Activated naive CD4-positive, alpha-beta T cell treated with anti-CD3 and anti-CD28 coated beads for 36 hours (primary cell): ENCODE measurements at regions of chr7 and their contacts with region 1.

Region 1: GRCh38 chr7:151028131-151028947 is at the start of gene ABCB8:
- DNase-seq: peak; percentile 100
- H3K4me3 Mint-ChIP-seq: peak within 1 kb of the TSS; percentile 91
- H3K27ac Mint-ChIP-seq: peak within 1 kb of the TSS; percentile 90
- H3K4me1 Mint-ChIP-seq: peaks cover 20% of the 10 kb centered on the region
- H3K27me3 Mint-ChIP-seq: no peaks in the 10 kb centered on the region
- total RNA-seq, gene ABCB8: 41.3 to 47.8 TPM

Region 2: DNA sequence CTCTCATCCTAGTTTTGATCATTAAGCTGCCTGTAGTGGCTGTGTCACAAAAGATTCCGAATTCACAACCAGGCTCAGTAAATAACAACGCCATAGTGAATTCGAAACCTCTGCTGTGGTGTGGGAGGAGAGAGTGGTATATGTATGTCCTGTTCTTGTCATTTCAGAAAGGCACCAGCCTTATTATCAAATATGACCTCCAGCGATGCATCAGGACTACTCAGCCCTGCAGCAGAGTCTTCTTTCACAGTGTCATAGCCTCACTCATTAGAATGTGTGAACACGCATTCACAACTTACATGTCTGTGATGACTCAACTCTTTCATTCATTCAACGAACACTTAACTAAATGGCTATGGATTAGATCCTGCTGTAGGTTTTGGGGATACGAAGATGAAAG is 160.7 kb before region 1 on chr7:
- CTCF ChIA-PET with region 1: no interaction called
- intact Hi-C with region 1: no loop called
- DNase-seq: no peak
- H3K4me3 Mint-ChIP-seq: no peak overlapping the region
- H3K27ac Mint-ChIP-seq: no peak overlapping the region
- H3K4me1 Mint-ChIP-seq: no peaks in the 10 kb centered on the region
- H3K27me3 Mint-ChIP-seq: no peaks in the 10 kb centered on the region

Region 3: DNA sequence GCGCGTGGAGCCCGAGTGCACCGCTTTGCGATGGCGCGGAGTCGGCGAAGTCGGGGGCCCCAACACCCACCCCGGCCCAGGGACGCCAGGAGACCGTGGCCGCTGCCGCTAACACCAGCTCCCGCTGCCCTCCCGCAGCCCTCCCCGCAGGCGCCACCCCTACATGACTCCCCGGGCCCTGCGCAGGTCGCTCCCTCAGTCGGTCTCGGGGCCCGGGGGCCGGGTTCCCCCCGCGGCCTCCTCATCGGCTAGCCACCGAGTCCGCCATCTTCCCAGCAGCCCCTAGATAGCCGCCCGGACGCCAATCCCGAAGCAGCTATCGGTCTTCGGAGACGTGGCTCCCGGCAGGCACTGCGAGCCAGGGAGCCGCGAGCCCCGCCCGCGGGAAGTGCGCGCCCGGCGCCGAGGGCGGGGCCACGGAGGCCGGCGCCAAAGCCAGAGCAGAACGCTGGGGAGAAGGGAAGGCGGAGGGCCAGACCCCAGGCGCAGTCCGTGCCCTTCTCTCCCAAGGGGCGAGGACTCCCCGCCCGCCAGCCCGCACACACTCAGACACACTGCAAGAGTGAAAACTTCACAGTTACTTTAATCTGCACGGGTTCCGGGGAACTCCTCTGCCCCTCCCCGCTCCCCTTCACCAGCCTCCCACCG is 52.3 kb after region 1 on chr7 and contains the start of gene FASTK:
- CTCF ChIA-PET with region 1: no interaction called
- intact Hi-C with region 1: loop called (anchors 1 kb)
- DNase-seq: peak; percentile 93
- H3K4me3 Mint-ChIP-seq: peak within 1 kb of the TSS; percentile 86
- H3K27ac Mint-ChIP-seq: peak within 1 kb of the TSS; percentile 73
- H3K4me1 Mint-ChIP-seq: peaks cover 36% of the 10 kb centered on the region
- H3K27me3 Mint-ChIP-seq: peaks cover 7% of the 10 kb centered on the region
- total RNA-seq, gene FASTK: 43.6 to 45.7 TPM